Activated CD4-positive, alpha-beta T cell treated with anti-CD3 and anti-CD28 coated beads for 36 hours (primary cell): ENCODE measurements at regions of chr14 and their contacts with region 1.

Region 1: DNA sequence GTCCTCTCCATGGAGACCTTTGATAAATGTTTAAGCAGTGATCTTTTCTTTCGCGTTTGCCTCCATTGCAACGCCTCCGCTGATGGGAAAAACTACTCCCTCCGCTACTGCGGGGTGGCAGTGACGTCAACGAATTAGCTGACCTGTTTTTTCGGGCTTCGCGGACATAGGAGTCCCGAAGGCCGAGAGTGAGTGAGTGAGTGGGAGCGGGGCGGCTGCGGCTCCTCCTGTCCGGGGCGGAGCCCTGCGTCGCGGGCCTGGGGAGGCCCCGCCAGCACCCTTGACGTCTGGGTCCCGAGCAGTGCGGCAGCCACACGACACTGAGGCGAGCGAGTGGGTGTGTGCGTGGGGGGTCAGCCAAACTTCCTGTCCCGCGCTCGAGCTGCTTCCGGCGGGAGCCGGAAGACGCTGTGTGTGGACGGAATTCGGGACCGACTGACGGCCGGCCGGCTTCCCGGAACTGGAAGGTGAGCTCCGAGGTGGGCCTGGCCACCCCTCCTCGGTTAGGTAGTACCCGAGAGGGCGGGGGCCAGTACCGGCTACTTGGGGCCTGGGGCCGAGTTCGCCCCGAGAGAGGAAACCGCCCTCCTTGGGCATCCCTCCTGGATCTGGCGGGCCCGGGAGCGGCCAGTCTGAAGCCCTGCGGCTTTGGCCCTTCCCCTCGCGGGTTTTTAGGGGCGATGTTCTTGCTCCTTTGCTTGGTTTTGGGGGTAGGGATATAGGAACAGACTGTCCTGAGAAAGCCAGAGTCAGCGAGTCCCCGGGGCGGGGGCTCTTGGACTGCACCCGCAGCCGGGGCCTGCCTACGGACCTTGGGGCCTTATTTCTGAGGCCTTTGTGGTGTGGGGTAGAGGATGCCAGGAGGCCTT is at the start of gene ZNF410:
- DNase-seq: peak; percentile 97
- ATAC-seq: peak; percentile 100
- H3K4me3 Mint-ChIP-seq: peak within 1 kb of the TSS; percentile 80
- H3K27ac Mint-ChIP-seq: peak within 1 kb of the TSS; percentile 99
- H3K4me1 Mint-ChIP-seq: peaks cover 43% of the 10 kb centered on the region
- H3K27me3 Mint-ChIP-seq: no peaks in the 10 kb centered on the region
- total RNA-seq, gene ZNF410: 58.6 to 66.2 TPM

Region 2: GRCh38 chr14:72926292-72927028 is 960.2 kb before region 1 on chr14 and contains the start of gene DCAF4:
- CTCF ChIA-PET with region 1: no interaction called
- POLR2A ChIA-PET with region 1: no interaction called
- intact Hi-C with region 1: loop called in 1 of 2 experiments (anchors 5 kb)
- DNase-seq: peak; percentile 96
- ATAC-seq: peak; percentile 99
- H3K4me3 Mint-ChIP-seq: peak within 1 kb of the TSS; percentile 89
- H3K27ac Mint-ChIP-seq: peak within 1 kb of the TSS; percentile 87
- H3K4me1 Mint-ChIP-seq: peaks cover 11% of the 10 kb centered on the region
- H3K27me3 Mint-ChIP-seq: no peaks in the 10 kb centered on the region
- total RNA-seq, gene DCAF4: 16.0 to 21.7 TPM

Region 3: GRCh38 chr14:73491256-73492042 is 395.2 kb before region 1 on chr14:
- CTCF ChIA-PET with region 1: no interaction called
- POLR2A ChIA-PET with region 1: no interaction called
- intact Hi-C with region 1: loop called in 1 of 2 experiments (anchors 5 kb)
- DNase-seq: peak; percentile 84
- ATAC-seq: peak; percentile 79
- H3K4me3 Mint-ChIP-seq: peak overlapping the region; percentile 81
- H3K27ac Mint-ChIP-seq: peak overlapping the region; percentile 75
- H3K4me1 Mint-ChIP-seq: peaks cover 40% of the 10 kb centered on the region
- H3K27me3 Mint-ChIP-seq: peaks cover 2% of the 10 kb centered on the region

Region 4: GRCh38 chr14:73713803-73714655 is 172.7 kb before region 1 on chr14 and contains the start of gene PNMA1:
- CTCF ChIA-PET with region 1: interaction called, 3 read pairs
- POLR2A ChIA-PET with region 1: no interaction called
- intact Hi-C with region 1: loop called (anchors 1 to 5 kb)
- DNase-seq: peak; percentile 92
- ATAC-seq: peak; percentile 79
- H3K4me3 Mint-ChIP-seq: peak within 1 kb of the TSS; percentile 98
- H3K27ac Mint-ChIP-seq: peak within 1 kb of the TSS; percentile 94
- H3K4me1 Mint-ChIP-seq: peaks cover 13% of the 10 kb centered on the region
- H3K27me3 Mint-ChIP-seq: no peaks in the 10 kb centered on the region
- total RNA-seq, gene PNMA1: 23.2 to 28.8 TPM

Region 5: DNA sequence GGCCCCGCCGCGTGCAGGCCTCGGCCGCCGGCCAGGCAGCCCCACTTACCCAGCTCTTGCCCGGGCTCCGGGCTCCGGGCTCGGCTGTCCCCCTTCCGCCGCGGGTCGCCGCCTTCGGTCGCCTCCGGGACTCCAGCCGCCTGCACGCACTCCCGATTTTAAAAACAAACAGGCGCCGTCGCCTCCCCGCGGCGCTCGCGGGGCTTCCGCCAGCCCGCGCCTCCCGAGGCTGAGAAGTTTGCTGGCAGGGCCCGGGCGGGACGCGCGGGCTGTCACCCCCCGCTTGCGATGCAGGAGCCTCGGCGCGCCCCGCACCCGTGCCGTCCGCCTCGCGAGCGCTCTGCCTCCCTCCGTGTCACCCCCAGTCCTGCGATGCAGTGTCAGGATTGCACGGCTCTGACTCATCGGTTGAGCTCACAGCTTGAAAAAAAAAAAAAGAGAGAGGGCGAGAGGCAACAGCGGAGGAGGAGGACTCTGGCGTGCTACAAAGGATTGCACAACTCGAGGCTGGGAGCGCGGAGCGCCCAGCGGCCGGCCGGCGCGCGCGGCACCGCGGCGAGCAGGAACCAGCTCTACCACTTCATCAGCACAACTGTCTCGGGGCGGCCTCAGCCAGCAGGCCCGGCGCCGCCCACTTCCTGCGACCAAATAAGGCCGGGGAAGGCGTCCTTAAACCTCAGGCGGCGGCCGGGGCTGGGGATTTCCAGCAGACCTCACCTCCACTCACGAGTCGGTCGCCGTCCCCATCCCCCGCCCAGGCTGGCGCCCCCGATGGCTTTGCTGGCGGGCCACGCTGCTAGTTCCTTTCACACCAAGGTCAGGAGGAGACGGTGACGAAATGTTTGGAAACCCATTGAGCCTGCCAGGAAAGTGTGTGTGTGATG is 126.7 kb before region 1 on chr14:
- CTCF ChIA-PET with region 1: interaction called, 5 read pairs
- POLR2A ChIA-PET with region 1: interaction called, 8 read pairs
- intact Hi-C with region 1: loop called (anchors 1 kb)
- DNase-seq: peak; percentile 98
- ATAC-seq: peak; percentile 74
- H3K4me3 Mint-ChIP-seq: peak overlapping the region; percentile 83
- H3K27ac Mint-ChIP-seq: peak overlapping the region; percentile 99
- H3K4me1 Mint-ChIP-seq: peaks cover 76% of the 10 kb centered on the region
- H3K27me3 Mint-ChIP-seq: no peaks in the 10 kb centered on the region

Region 6: GRCh38 chr14:73851644-73852382 is 34.9 kb before region 1 on chr14 and contains the start of gene PTGR2:
- CTCF ChIA-PET with region 1: interaction called, 5 read pairs
- POLR2A ChIA-PET with region 1: interaction called, 10 read pairs
- intact Hi-C with region 1: loop called (anchors 1 kb)
- DNase-seq: peak; percentile 94
- ATAC-seq: peak; percentile 94
- H3K4me3 Mint-ChIP-seq: peak within 1 kb of the TSS; percentile 98
- H3K27ac Mint-ChIP-seq: peak within 1 kb of the TSS; percentile 100
- H3K4me1 Mint-ChIP-seq: peaks cover 24% of the 10 kb centered on the region
- H3K27me3 Mint-ChIP-seq: no peaks in the 10 kb centered on the region
- total RNA-seq, gene PTGR2: 12.6 to 14.3 TPM

Region 7: DNA sequence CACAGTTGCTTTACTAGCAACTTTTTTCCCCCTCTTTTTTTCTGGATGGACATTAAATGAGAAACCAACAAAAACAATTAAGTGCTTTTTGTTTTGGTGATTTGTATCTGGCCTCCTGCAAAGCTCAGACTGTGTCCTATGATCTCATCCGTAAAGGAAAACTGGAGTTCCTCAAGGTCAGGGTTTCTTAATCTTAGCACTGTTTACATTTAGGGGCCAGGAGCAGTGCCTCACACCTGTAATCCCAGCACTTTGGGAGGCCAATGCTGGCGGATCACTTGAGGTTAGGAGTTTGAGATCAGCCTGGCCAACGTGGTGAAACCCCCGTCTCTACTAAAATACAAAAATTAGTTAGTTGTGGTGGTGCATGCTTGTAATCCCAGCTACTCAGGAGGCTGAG is 104.4 kb after region 1 on chr14:
- CTCF ChIA-PET with region 1: no interaction called
- POLR2A ChIA-PET with region 1: no interaction called
- intact Hi-C with region 1: no loop called
- DNase-seq: no peak
- ATAC-seq: no peak
- H3K4me3 Mint-ChIP-seq: no peak overlapping the region
- H3K27ac Mint-ChIP-seq: no peak overlapping the region
- H3K4me1 Mint-ChIP-seq: no peaks in the 10 kb centered on the region
- H3K27me3 Mint-ChIP-seq: no peaks in the 10 kb centered on the region

Region 8: DNA sequence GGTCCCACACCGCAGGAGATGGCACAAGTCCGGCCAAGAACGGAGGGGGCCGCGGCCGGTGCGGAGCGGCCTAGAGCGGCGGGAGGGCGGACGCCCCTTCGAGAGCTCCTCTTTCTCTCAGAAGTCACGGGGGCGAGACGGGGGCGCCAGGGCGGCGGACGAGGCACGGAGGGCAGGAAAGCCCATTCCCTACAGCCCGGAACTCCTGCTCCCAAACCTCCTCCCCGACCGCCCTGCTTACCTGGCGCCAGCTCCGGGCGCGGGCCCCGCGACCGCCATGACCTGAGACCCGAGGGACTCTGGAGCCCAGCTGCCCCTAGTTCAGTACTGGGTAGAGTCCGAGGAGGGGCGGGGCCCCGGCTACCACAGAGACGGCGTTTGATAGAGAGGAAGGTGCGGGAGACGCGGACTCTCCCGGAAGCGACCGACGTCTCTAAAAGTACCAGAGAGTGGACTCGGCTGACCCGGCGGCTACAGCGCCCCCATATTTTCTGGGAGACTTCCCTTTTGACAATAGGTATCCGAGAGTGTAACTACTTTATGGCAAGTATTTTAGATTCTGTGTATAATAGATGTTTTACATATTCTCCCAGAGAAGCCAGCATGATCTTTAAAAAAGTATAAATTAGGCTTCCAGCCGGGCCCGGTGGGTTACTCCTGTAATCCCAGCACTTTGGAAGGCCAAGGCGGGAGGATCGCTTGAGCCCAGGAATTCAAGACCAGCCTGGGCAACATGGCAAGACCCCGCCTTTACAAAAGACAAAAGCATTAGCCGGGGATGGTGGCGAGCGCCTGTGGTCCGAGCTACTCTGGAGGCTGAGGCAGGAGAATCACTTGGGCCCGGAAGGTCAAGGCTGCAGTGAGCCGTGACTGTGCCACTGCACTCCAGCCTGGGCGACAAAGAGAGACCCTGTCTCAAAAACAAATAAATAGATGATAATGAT is 416.2 kb after region 1 on chr14 and contains the start of gene ABCD4:
- CTCF ChIA-PET with region 1: no interaction called
- POLR2A ChIA-PET with region 1: no interaction called
- intact Hi-C with region 1: loop called in 1 of 2 experiments (anchors 5 kb)
- DNase-seq: peak; percentile 91
- ATAC-seq: peak; percentile 95
- H3K4me3 Mint-ChIP-seq: peak within 1 kb of the TSS; percentile 98
- H3K27ac Mint-ChIP-seq: peak within 1 kb of the TSS; percentile 98
- H3K4me1 Mint-ChIP-seq: peaks cover 32% of the 10 kb centered on the region
- H3K27me3 Mint-ChIP-seq: no peaks in the 10 kb centered on the region
- total RNA-seq, gene ABCD4: 43.0 to 43.1 TPM